Activated CD4-positive, alpha-beta memory T cell treated with anti-CD3 and anti-CD28 coated beads, Interleukin-2, amount 10 ng/mL, durations not matched to agents 7 days and 5 days (primary cell): ENCODE measurements at regions of chr12 and their contacts with region 1.

Region 1: GRCh38 chr12:110301065-110301806 is 20.2 kb downstream of the ATP2A2 start:
- DNase-seq: no peak
- H3K4me3 Mint-ChIP-seq: no peak overlapping the region
- H3K27ac Mint-ChIP-seq: peak overlapping the region; percentile 65
- H3K4me1 Mint-ChIP-seq: peaks cover 55% of the 10 kb centered on the region
- H3K27me3 Mint-ChIP-seq: no peaks in the 10 kb centered on the region

Region 2: DNA sequence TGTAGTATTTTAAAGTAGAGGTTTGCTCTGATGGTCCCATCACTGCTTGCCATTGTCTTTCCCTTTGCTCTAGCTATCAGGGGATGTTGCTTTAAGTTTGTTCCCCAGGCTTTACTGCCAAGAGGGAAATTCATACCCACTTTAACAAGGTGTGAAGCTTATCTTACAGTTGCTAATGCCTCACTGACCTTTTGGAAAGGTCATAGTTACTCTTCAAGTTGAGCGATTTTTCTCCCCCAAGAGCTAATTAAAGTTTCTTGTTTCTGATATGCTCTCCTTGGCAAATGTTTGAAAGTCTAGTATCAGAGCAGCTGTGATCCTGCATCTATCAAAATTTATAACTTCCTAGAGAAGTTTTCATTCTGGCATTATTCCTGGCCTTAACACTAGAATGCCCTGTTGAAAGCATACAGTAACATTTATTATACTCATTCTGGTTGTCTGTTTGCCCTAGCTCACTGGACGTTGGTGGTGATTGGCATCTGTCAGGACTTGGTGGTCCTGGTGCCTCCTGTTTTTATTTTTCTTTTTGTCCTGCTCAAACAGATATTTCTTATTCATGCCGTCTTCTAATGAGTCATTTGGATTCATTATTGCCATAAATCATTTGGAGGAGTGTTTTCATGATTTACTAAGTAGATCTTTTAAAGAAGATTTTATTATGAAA is 12.1 kb before region 1 on chr12:
- CTCF ChIA-PET with region 1: interaction called, 3 read pairs
- POLR2A ChIA-PET with region 1: interaction called, 11 read pairs
- DNase-seq: peak; percentile 4
- H3K4me3 Mint-ChIP-seq: no peak overlapping the region
- H3K27ac Mint-ChIP-seq: peak overlapping the region; percentile 29
- H3K4me1 Mint-ChIP-seq: peaks cover 60% of the 10 kb centered on the region
- H3K27me3 Mint-ChIP-seq: no peaks in the 10 kb centered on the region